WTC11 (cell line): ENCODE measurements at regions of chr1 and their contacts with region 1.

Region 1: GRCh38 chr1:221543529-221544120 is 198.3 kb downstream of the DUSP10 start:
- DNase-seq: no peak
- ATAC-seq: peak; percentile 61
- H3K4me3 Mint-ChIP-seq: no peak overlapping the region
- H3K27ac Mint-ChIP-seq: no peak overlapping the region
- H3K4me1 Mint-ChIP-seq: peaks cover 13% of the 10 kb centered on the region
- H3K27me3 Mint-ChIP-seq: no peaks in the 10 kb centered on the region
- CTCF ChIP-seq: no peak

Region 2: DNA sequence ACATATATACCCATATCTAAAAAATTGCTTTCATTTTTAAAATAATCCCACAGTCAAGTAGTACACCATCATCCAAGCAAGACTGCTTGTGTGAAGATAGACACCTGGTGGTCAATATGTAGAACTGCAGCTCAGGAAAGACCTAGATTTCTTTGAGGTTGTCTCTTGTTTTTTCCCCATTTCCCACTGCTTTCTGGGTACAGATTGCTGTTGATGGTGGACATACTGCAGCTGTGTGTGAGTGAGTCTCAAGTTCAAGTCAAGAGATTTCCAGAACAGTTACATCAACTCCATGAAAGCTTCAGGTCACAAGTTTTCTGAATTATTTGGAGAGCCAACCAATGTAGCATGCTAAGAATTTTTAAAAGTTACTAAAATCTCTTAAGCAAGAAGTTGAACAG is 108.1 kb before region 1 on chr1:
- CTCF ChIA-PET with region 1: no interaction called
- POLR2A ChIA-PET with region 1: no interaction called
- DNase-seq: no peak
- ATAC-seq: peak; percentile 75
- H3K4me3 Mint-ChIP-seq: no peak overlapping the region
- H3K27ac Mint-ChIP-seq: no peak overlapping the region
- H3K4me1 Mint-ChIP-seq: peaks cover 14% of the 10 kb centered on the region
- H3K27me3 Mint-ChIP-seq: no peaks in the 10 kb centered on the region
- CTCF ChIP-seq: peak; percentile 88

Region 3: DNA sequence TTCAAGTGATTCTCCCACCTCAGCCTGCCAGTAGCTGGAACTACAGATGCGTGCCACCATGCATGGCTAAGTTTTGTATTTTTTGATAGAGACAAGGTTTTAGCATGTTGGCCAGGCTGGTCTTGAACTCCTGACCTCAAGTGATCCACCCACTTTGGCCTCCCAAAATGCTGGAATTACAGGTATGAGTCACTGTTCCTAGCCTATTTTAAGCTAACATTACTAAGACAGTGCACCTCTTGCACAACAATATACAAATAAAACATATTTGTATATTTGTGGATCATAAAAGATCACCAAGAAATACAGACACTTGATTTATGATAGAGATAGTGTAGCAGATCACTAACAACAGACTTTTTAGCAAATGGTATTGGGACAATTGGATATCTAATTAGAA is 59.2 kb after region 1 on chr1:
- CTCF ChIA-PET with region 1: no interaction called
- POLR2A ChIA-PET with region 1: no interaction called
- DNase-seq: no peak
- ATAC-seq: no peak
- H3K4me3 Mint-ChIP-seq: no peak overlapping the region
- H3K27ac Mint-ChIP-seq: no peak overlapping the region
- H3K4me1 Mint-ChIP-seq: peaks cover 4% of the 10 kb centered on the region; the same call in 1 of the 2 replicates
- H3K27me3 Mint-ChIP-seq: no peaks in the 10 kb centered on the region
- CTCF ChIP-seq: no peak

Region 4: DNA sequence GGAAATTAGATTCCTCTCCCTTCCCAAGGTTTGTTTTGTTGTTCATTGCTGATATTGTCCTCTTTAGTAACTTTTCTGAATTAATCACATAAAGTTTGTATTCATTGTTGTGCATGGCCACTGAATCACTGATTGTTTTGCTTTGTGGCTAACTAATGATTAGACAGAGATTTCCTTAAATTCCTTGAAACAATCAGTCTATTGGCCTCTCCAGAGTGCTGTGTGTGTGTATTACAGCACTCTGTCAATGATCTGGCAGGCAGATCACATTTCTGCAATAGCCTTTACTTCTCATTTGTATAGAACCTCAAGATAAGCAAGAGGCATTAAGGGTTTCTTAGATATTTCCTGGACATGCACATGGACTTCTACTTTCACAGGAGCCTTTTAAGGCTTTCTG is 119.7 kb after region 1 on chr1:
- CTCF ChIA-PET with region 1: no interaction called
- POLR2A ChIA-PET with region 1: interaction called, 11 read pairs
- DNase-seq: no peak
- ATAC-seq: no peak
- H3K4me3 Mint-ChIP-seq: no peak overlapping the region
- H3K27ac Mint-ChIP-seq: no peak overlapping the region
- H3K4me1 Mint-ChIP-seq: peaks cover 21% of the 10 kb centered on the region
- H3K27me3 Mint-ChIP-seq: no peaks in the 10 kb centered on the region
- CTCF ChIP-seq: no peak

Region 5: DNA sequence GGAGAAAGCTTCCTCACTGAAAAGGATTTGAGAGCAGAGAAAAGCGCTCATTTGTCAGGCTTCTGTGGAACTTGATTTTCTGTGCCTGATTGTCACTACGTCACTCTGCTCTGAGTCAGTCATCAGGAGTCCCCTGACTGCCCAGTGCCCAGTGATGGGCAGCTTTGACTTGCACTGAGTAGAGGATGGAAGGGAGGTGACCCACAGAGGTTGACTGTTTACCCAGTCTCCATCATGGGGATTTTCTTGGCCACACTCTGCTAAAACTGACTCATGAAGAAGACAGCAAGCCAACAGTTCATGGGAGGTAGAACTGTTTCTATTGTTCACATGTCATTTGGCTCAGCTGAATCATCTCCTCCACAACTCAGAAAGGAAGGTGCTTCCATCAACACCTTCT is 280.4 kb after region 1 on chr1:
- CTCF ChIA-PET with region 1: no interaction called
- POLR2A ChIA-PET with region 1: no interaction called
- DNase-seq: no peak
- ATAC-seq: no peak
- H3K4me3 Mint-ChIP-seq: no peak overlapping the region
- H3K27ac Mint-ChIP-seq: no peak overlapping the region
- H3K4me1 Mint-ChIP-seq: peaks cover 24% of the 10 kb centered on the region
- H3K27me3 Mint-ChIP-seq: no peaks in the 10 kb centered on the region
- CTCF ChIP-seq: no peak